Activated CD4-positive, alpha-beta memory T cell treated with anti-CD3 and anti-CD28 coated beads, Interleukin-2, amount 10 ng/mL, durations not matched to agents 7 days and 5 days (primary cell): ENCODE measurements at regions of chr9 and their contacts with region 1.

Region 1: DNA sequence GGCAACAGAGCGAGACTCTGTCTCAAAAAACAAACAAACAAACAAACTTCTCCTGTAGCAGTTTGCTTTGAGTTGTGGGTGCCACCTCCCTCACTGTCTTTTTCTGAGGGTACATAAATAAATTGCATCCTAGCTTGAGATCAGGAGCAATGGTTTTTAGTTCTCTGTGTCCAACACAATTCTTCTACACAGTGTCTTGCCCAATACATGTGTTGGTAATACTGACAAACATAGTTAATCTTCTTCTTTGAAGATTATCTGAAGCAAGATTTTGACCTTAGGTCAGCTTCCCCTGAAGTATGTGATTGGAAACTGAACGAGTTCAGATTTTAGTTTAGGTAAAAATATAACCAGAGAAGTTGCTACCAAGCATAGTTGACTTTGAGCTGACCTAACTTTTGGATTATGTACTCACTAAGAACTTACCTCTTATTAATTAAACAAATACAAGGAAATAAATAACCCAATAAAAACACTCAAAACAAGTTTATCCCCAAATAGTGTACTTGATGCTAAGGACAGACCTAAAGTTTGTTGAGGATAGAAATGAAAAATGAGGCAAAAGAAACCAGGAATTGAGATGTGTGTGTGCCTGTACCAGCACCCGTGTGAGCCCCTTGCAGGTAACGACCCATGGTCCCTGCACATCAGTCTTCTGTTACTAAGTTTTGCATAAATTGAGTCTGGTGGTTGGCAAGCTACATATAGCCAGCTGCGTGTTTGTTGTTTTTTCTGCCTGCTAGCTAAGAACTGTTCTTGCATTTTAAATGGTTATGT is 16.2 kb downstream of the TJP2 start:
- DNase-seq: no peak
- H3K4me3 Mint-ChIP-seq: no peak overlapping the region
- H3K27ac Mint-ChIP-seq: no peak overlapping the region
- H3K4me1 Mint-ChIP-seq: peaks cover 49% of the 10 kb centered on the region
- H3K27me3 Mint-ChIP-seq: no peaks in the 10 kb centered on the region

Region 2: DNA sequence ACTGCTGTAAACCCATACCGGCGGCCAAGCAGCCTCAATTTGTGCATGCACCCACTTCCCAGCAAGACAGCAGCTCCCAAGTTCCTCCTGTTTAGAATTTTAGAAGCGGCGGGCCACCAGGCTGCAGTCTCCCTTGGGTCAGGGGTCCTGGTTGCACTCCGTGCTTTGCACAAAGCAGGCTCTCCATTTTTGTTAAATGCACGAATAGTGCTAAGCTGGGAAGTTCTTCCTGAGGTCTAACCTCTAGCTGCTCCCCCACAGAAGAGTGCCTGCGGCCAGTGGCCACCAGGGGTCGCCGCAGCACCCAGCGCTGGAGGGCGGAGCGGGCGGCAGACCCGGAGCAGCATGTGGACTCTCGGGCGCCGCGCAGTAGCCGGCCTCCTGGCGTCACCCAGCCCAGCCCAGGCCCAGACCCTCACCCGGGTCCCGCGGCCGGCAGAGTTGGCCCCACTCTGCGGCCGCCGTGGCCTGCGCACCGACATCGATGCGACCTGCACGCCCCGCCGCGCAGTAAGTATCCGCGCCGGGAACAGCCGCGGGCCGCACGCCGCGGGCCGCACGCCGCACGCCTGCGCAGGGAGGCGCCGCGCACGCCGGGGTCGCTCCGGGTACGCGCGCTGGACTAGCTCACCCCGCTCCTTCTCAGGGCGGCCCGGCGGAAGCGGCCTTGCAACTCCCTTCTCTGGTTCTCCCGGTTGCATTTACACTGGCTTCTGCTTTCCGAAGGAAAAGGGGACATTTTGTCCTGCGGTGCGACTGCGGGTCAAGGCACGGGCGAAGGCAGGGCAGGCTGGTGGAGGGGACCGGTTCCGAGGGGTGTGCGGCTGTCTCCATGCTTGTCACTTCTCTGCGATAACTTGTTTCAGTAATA is 154.6 kb before region 1 on chr9 and contains the start of gene FXN:
- CTCF ChIA-PET with region 1: interaction called, 31 read pairs
- POLR2A ChIA-PET with region 1: interaction called, 4 read pairs
- DNase-seq: peak; percentile 86
- H3K4me3 Mint-ChIP-seq: peak within 1 kb of the TSS; percentile 96
- H3K27ac Mint-ChIP-seq: peak within 1 kb of the TSS; percentile 84
- H3K4me1 Mint-ChIP-seq: peaks cover 32% of the 10 kb centered on the region
- H3K27me3 Mint-ChIP-seq: no peaks in the 10 kb centered on the region
- total RNA-seq, gene FXN: 21.8 to 22.5 TPM

Region 3: DNA sequence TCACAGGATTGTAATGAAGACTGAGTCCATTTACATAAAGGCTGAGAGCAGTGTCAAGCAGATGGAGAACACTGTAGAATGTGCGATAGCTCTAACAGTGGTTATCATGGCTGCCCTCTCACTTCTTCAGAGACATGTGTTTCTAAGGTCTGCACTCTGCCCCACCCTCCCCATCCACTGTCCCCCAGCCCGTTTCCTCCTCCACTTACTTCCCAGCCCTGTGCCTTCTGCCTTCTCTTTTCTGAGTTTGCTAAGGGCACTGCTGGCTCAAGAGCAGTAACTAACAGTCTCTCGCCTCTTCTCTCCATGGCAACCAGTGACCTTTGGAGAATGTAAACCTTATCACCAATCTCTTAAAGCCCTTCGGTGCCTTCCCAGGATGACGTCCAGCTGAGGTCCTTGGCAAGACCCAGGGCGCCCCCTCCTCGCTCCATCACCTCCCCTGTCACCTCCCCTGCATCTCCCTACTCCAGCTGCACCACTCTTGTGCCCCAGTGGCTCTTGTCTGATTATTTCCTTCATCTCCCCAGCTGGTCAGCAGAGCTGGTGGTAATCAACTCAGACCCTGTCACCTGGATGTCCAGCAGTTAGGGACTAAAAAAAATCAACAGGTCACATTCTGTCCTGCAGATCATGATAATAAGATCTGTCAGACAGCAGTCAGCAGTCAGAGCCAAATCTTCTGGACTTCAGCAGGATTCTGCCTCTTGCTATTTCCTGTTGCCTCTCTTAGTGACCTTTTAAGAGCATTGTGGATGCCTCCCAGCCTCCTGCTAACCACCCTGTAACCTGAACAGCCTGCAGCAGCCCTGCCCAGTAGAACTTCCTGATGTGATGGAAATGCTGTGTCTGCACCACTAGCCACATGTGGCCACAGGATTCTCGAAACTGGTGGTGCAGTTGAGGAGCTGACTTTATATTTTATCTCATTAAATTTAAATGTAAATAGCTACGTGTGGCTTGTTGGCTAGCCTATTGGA is 145.7 kb before region 1 on chr9:
- CTCF ChIA-PET with region 1: interaction called, 10 read pairs
- POLR2A ChIA-PET with region 1: no interaction called
- DNase-seq: peak; percentile 68
- H3K4me3 Mint-ChIP-seq: no peak overlapping the region
- H3K27ac Mint-ChIP-seq: peak overlapping the region; percentile 71
- H3K4me1 Mint-ChIP-seq: peaks cover 48% of the 10 kb centered on the region
- H3K27me3 Mint-ChIP-seq: no peaks in the 10 kb centered on the region

Region 4: GRCh38 chr9:69056191-69056815 is 134.0 kb before region 1 on chr9:
- CTCF ChIA-PET with region 1: interaction called, 161 read pairs
- POLR2A ChIA-PET with region 1: interaction called, 4 read pairs
- DNase-seq: no peak
- H3K4me3 Mint-ChIP-seq: no peak overlapping the region
- H3K27ac Mint-ChIP-seq: no peak overlapping the region
- H3K4me1 Mint-ChIP-seq: peaks cover 18% of the 10 kb centered on the region
- H3K27me3 Mint-ChIP-seq: no peaks in the 10 kb centered on the region

Region 5: GRCh38 chr9:69121828-69122548 is 68.3 kb before region 1 on chr9:
- CTCF ChIA-PET with region 1: interaction called, 20 read pairs
- POLR2A ChIA-PET with region 1: interaction called, 3 read pairs
- DNase-seq: peak; percentile 47
- H3K4me3 Mint-ChIP-seq: peak overlapping the region; percentile 87
- H3K27ac Mint-ChIP-seq: peak overlapping the region; percentile 40
- H3K4me1 Mint-ChIP-seq: peaks cover 17% of the 10 kb centered on the region
- H3K27me3 Mint-ChIP-seq: peaks cover 5% of the 10 kb centered on the region

Region 6: GRCh38 chr9:69157751-69158466 is 32.4 kb before region 1 on chr9:
- CTCF ChIA-PET with region 1: interaction called, 47 read pairs
- POLR2A ChIA-PET with region 1: no interaction called
- DNase-seq: no peak
- H3K4me3 Mint-ChIP-seq: no peak overlapping the region
- H3K27ac Mint-ChIP-seq: no peak overlapping the region
- H3K4me1 Mint-ChIP-seq: no peaks in the 10 kb centered on the region
- H3K27me3 Mint-ChIP-seq: no peaks in the 10 kb centered on the region

Region 7: GRCh38 chr9:69215774-69216485 is 25.7 kb after region 1 on chr9:
- CTCF ChIA-PET with region 1: interaction called, 16 read pairs
- POLR2A ChIA-PET with region 1: no interaction called
- DNase-seq: no peak
- H3K4me3 Mint-ChIP-seq: no peak overlapping the region
- H3K27ac Mint-ChIP-seq: no peak overlapping the region
- H3K4me1 Mint-ChIP-seq: no peaks in the 10 kb centered on the region
- H3K27me3 Mint-ChIP-seq: no peaks in the 10 kb centered on the region